Activated CD8-positive, alpha-beta T cell treated with anti-CD3 and anti-CD28 coated beads for 36 hours (primary cell): ENCODE measurements at regions of chr3 and their contacts with region 1.

Region 1: GRCh38 chr3:128068211-128068620 is 16.0 kb downstream of the SEC61A1 start:
- DNase-seq: peak; percentile 50
- ATAC-seq: peak; percentile 76
- H3K4me3 Mint-ChIP-seq: no peak overlapping the region
- H3K27ac Mint-ChIP-seq: peak overlapping the region; percentile 64
- H3K4me1 Mint-ChIP-seq: peaks cover 3% of the 10 kb centered on the region
- H3K27me3 Mint-ChIP-seq: no peaks in the 10 kb centered on the region
- CTCF ChIP-seq: peak; percentile 65

Region 2: DNA sequence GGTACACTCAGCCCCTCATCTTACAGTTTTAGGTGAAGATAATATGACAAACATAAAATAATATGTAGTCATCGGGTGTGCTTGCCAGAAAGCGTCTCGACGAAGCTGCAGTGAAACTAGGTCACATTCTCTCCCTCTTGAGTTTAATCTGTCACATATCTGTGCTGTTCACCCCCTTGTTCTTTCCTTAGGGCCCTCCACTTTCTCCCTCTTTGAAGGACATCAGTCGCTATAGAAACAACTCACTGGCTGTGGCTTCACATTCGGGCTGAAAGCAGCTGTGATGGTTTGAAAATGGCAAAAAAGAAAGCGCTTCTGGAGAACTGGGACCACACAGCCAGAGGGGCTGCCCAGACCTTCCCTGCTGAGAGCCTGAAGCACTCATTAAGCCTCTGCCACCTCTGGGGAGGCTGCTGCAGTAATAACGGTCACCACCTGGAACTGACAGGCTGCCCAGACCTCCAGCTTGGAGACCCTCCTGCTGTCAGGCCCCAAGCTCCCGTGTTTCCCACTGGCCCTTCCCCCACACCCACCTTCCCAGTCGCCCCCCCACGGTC is 345.1 kb before region 1 on chr3:
- CTCF ChIA-PET with region 1: no interaction called
- POLR2A ChIA-PET with region 1: no interaction called
- intact Hi-C with region 1: no loop called
- DNase-seq: no peak
- ATAC-seq: no peak
- H3K4me3 Mint-ChIP-seq: no peak overlapping the region
- H3K27ac Mint-ChIP-seq: no peak overlapping the region
- H3K4me1 Mint-ChIP-seq: no peaks in the 10 kb centered on the region
- H3K27me3 Mint-ChIP-seq: peaks cover 3% of the 10 kb centered on the region
- CTCF ChIP-seq: no peak

Region 3: DNA sequence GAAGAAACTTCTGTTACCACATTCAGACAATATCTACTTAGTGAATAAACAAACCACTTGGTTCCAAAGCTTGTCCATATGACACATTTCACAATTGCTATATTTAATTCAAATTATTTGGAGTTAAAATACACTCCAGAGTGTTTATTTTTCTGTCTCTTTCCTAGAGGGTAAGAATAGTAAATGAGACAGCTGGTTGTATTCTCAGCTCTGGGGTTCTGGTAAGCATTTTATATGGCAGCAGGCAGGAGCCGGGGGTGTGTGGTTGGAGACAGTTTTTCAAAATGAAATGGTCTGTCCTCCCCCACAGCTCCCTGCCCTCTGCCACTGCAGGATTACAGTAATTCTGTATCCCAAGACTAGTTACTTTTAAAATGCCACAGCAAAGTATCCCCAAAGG is 26.9 kb before region 1 on chr3:
- CTCF ChIA-PET with region 1: no interaction called
- POLR2A ChIA-PET with region 1: no interaction called
- intact Hi-C with region 1: no loop called
- DNase-seq: no peak
- ATAC-seq: no peak
- H3K4me3 Mint-ChIP-seq: no peak overlapping the region
- H3K27ac Mint-ChIP-seq: no peak overlapping the region
- H3K4me1 Mint-ChIP-seq: no peaks in the 10 kb centered on the region
- H3K27me3 Mint-ChIP-seq: no peaks in the 10 kb centered on the region
- CTCF ChIP-seq: no peak

Region 4: GRCh38 chr3:128051837-128052594 is 16.2 kb before region 1 on chr3 and contains the start of gene SEC61A1:
- CTCF ChIA-PET with region 1: interaction called, 30 read pairs
- POLR2A ChIA-PET with region 1: interaction called, 37 read pairs
- intact Hi-C with region 1: no loop called
- DNase-seq: peak; percentile 95
- ATAC-seq: peak; percentile 97
- H3K4me3 Mint-ChIP-seq: peak within 1 kb of the TSS; percentile 100
- H3K27ac Mint-ChIP-seq: peak within 1 kb of the TSS; percentile 94
- H3K4me1 Mint-ChIP-seq: peaks cover 39% of the 10 kb centered on the region
- H3K27me3 Mint-ChIP-seq: no peaks in the 10 kb centered on the region
- CTCF ChIP-seq: no peak
- total RNA-seq, gene SEC61A1: 107 to 116 TPM

Region 5: GRCh38 chr3:128153156-128154041 is 85.2 kb after region 1 on chr3 and contains the start of gene EEFSEC:
- CTCF ChIA-PET with region 1: no interaction called
- POLR2A ChIA-PET with region 1: no interaction called
- intact Hi-C with region 1: no loop called
- DNase-seq: peak; percentile 85
- ATAC-seq: peak; percentile 94
- H3K4me3 Mint-ChIP-seq: peak within 1 kb of the TSS; percentile 80
- H3K27ac Mint-ChIP-seq: peak within 1 kb of the TSS; percentile 97
- H3K4me1 Mint-ChIP-seq: peaks cover 12% of the 10 kb centered on the region
- H3K27me3 Mint-ChIP-seq: no peaks in the 10 kb centered on the region
- CTCF ChIP-seq: no peak
- total RNA-seq, gene EEFSEC: 19.2 to 19.6 TPM